Esophagus squamous epithelium (tissue), 5 donors: ENCODE measurements at regions of chr9 and their contacts with region 1.

Region 1: DNA sequence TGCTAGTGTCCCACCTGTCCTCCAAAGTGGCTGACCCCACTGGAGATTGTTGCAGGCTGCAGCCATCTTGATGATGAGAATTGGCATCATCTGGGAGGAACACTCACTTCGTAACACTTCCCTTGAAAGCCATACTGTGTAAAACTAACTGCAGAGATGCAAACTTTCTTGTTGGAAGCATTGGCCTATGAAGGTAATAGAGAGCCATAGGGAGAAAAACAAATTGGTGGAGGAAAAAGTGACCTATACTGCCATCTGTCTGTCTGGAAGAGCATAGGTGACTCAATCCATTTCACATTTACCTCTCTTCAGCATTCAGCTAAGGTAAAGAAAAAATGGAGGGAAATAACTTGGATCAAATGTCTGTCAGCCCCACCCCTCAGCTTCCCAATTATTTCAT is 473.4 kb downstream of the NTRK2 start:
- DNase-seq: no peak
- H3K4me3 ChIP-seq: no peak overlapping the region
- H3K27ac ChIP-seq: no peak overlapping the region
- H3K4me1 ChIP-seq: peaks cover 0 to 18% (median 4%) of the 10 kb centered on the region in 3 donors
- H3K27me3 ChIP-seq: no peaks in the 10 kb centered on the region
- CTCF ChIP-seq: peak in 5 of 6 experiments; percentile 40 to 71 (median 60)
- POLR2A ChIP-seq: no peak

Region 2: DNA sequence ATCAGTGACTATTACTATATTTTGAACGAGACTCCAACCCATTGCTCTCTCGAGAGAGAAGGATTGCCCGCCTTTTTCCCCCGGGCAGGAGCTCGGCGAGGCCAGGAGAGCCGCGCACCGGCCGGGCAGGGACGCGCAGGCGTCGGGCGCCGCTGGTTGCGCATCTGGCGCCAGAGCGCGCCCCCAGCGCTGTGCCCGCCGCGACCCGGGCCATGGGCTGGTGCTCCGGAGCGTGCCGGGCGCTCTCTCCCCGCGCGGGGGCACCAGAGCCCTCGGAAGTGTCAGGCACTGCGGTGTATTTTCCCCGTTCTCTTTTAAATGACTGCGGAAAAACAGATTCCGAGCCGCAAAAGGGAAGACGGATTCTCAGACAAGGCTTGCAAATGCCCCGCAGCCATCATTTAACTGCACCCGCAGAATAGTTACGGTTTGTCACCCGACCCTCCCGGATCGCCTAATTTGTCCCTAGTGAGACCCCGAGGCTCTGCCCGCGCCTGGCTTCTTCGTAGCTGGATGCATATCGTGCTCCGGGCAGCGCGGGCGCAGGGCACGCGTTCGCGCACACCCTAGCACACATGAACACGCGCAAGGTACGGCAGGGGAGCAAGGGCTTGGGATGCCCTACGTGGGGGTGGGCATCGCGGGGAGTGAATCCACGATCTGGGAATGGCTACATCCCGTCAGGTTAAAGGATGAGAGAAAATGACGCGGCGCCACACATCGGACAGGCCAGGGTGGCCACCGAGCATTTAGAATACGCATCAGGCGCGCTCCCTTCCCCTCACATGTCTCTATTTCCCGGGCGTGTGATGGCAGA is 474.6 kb before region 1 on chr9:
- intact Hi-C with region 1: loop called (anchors 10 kb)
- DNase-seq: no peak
- H3K4me3 ChIP-seq: peak overlapping the region; percentile 45 to 70 (median 56)
- H3K27ac ChIP-seq: peak overlapping the region; percentile 35 to 86 (median 70)
- H3K4me1 ChIP-seq: peaks cover 5 to 55% (median 14%) of the 10 kb centered on the region in 3 donors
- H3K27me3 ChIP-seq: peaks cover 0 to 47% (median 0%) of the 10 kb centered on the region in 4 donors
- CTCF ChIP-seq: peak; percentile 41 to 81 (median 58)
- POLR2A ChIP-seq: no peak